Right lobe of liver (tissue), 6 donors: ENCODE measurements at regions of chr14 and their contacts with region 1.

Region 1: DNA sequence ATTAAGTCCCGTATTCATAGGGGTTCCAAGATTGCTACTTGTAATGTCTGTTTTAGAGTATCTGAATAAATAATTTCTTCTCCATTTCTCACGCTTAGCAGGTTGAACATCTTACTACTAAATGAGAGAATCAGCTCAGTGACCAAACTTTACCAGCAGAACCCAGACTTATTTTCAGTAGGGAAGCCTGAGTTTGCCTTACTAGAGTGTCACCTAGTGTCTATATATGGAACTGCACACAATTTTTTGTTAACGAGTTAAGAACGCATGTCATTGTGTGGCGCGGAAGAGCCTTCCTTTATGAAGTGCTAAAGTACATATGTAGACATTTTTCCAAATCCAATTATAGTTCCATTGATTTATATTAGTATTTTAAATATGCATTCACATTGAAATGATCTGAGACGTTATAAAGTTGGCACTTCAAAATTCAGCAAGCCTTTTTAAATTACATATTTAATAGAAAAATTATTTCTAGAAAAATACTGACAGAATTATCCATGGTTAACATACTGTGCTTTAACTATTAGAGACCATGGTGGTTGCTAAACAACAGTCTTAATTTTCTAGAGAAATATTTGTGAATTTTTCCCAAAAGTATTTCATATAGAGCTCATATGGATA is 88.3 kb downstream of the RPS29 start:
- DNase-seq: no peak
- ATAC-seq: peak; percentile 89 to 99 (median 96)
- H3K4me3 ChIP-seq: no peak overlapping the region
- H3K27ac ChIP-seq: no peak overlapping the region
- H3K4me1 ChIP-seq: no peaks in the 10 kb centered on the region
- H3K27me3 ChIP-seq: no peaks in the 10 kb centered on the region
- CTCF ChIP-seq: peak; percentile 90 to 96 (median 94)
- POLR2A ChIP-seq: no peak

Region 2: GRCh38 chr14:49319810-49320209 is 178.0 kb before region 1 on chr14:
- intact Hi-C with region 1: no loop called
- DNase-seq: no peak
- ATAC-seq: no peak
- H3K4me3 ChIP-seq: no peak overlapping the region
- H3K27ac ChIP-seq: no peak overlapping the region
- H3K4me1 ChIP-seq: no peaks in the 10 kb centered on the region
- H3K27me3 ChIP-seq: no peaks in the 10 kb centered on the region
- CTCF ChIP-seq: no peak
- POLR2A ChIP-seq: no peak

Region 3: GRCh38 chr14:49461529-49462401 is 36.1 kb before region 1 on chr14:
- intact Hi-C with region 1: loop called in 1 of 2 experiments (anchors 5 kb)
- DNase-seq: peak in 1 of 3 donors; percentile 50
- ATAC-seq: peak; percentile 92 to 97 (median 94)
- H3K4me3 ChIP-seq: no peak overlapping the region
- H3K27ac ChIP-seq: no peak overlapping the region
- H3K4me1 ChIP-seq: no peaks in the 10 kb centered on the region
- H3K27me3 ChIP-seq: no peaks in the 10 kb centered on the region
- CTCF ChIP-seq: peak; percentile 68 to 85 (median 82)
- POLR2A ChIP-seq: no peak

Region 4: DNA sequence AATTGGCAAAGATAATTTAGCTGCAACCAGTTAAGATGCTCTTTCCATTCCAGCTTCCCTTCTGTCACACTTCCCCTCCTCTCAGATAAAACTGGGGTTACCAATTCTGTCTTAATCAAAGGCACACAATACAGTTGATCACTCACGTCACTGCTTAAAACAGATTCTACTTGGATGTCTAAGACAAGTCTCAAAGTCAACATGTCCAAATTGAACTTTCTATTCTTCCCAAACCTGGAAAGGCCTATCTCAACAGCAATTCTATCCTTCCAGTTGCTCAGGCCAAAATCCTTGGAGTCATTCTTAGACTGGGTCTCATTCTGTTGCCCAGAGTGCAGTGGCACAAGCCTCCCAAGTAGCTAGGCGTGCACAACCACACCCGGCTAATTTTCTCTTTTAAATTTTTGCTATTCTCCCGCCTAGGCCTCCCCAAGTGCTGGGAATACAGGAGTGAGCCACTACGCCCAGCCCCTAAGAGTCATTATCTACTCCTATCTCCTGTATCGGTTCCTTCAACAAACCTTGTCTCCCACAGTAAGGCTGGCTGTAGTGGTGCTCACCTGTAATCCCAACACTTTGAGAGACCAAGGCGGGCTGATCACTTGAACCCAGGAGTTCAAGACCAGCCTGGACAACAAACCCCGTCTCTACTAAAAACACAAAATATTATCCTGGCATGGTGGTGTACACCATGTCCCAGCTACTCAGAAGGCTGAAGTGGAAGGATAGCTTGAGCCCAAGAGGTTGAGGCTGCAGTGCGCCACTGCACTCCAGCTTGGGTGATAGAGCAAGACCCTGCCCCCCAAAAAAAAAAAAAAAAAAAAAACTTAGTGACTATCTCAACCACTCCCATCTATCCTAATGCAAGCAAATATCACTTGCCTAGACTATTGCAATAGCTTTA is 83.6 kb after region 1 on chr14:
- intact Hi-C with region 1: no loop called
- DNase-seq: no peak
- ATAC-seq: no peak
- H3K4me3 ChIP-seq: no peak overlapping the region
- H3K27ac ChIP-seq: no peak overlapping the region
- H3K4me1 ChIP-seq: peaks cover 0 to 26% (median 6%) of the 10 kb centered on the region in 4 donors
- H3K27me3 ChIP-seq: no peaks in the 10 kb centered on the region
- CTCF ChIP-seq: no peak
- POLR2A ChIP-seq: no peak